ENCODE measurements at regions of chr4 and their contacts with region 1.

Region 1: DNA sequence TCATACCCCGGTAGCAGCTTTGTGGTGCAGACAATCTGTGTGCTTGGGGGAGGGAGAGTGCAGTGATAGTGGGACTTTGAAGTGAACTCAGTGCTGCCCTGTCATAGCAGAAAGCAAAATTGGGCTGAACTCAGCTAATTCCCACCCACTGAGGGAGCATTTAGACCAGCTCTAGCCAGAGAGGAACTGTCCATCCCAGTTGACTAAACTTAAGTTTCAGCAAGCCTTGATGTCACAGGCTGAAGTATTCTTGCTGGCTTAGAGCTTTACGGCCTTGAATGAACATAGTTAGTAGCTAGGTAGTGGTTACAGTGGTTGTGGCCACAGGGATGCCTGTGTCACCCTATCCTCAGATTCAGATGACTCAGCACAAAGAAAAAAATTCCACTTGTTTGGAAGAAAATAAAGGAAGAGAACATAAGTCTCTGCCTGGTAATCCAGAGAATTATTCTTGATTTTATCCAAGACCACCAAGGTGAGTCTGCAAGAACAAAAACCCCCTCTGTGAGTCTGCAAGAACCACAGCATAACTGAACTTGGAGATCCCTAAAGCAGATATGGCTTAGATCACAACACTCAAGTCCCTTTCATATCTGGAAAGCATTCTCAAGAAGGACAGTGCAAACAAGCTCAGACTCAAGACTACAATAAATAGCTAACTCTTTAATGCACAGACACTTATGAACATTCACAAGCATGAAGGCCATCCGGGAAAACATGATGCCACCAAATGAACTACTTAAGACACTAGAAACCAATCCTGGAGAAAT is 39.4 kb downstream of the ADH7 start:
- DNase-seq: no peak
- ATAC-seq: peak; percentile 68
- H3K4me3 ChIP-seq: no peak overlapping the region
- H3K27ac ChIP-seq: peak overlapping the region; percentile 95 to 99
- H3K4me1 ChIP-seq: peaks cover 2 to 8% of the 10 kb centered on the region in 2 donors
- H3K27me3 ChIP-seq: no peaks in the 10 kb centered on the region

Region 2: DNA sequence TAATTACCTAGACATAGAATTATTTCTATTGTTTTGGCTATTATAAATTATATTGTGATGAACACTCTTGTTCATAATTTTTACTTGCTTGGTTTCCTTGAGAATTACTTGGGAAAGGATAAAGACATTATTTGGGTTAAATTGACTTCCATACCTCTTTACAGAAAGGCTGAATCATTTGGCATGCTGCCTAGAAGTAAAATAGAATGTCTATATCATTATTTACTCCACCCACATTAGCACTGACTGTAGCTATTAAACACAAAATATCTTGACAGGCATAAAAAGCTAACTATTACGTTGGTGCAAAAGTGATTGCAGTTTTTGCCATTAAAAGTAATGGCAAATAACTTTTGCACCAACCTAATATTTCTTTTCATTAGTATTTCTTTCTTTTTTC is 147.1 kb before region 1 on chr4:
- intact Hi-C with region 1: loop called in 1 of 2 experiments (anchors 2 kb)
- DNase-seq: no peak
- ATAC-seq: no peak
- H3K4me3 ChIP-seq: no peak overlapping the region
- H3K27ac ChIP-seq: no peak overlapping the region
- H3K4me1 ChIP-seq: no peaks in the 10 kb centered on the region
- H3K27me3 ChIP-seq: no peaks in the 10 kb centered on the region

Region 3: GRCh38 chr4:99300934-99301333 is 94.8 kb before region 1 on chr4:
- intact Hi-C with region 1: loop called (anchors 2 to 5 kb)
- DNase-seq: peak; percentile 86 to 91
- ATAC-seq: peak; percentile 86
- H3K4me3 ChIP-seq: no peak overlapping the region
- H3K27ac ChIP-seq: peak overlapping the region in 1 of 2 donors; percentile 57
- H3K4me1 ChIP-seq: peaks cover 1 to 4% of the 10 kb centered on the region in 2 donors
- H3K27me3 ChIP-seq: no peaks in the 10 kb centered on the region

Region 4: GRCh38 chr4:99723612-99724011 is 327.8 kb after region 1 on chr4:
- intact Hi-C with region 1: no loop called
- DNase-seq: peak; percentile 72 to 81
- ATAC-seq: peak; percentile 81
- H3K4me3 ChIP-seq: no peak overlapping the region
- H3K27ac ChIP-seq: no peak overlapping the region
- H3K4me1 ChIP-seq: peaks cover 0 to 4% of the 10 kb centered on the region in 2 donors
- H3K27me3 ChIP-seq: no peaks in the 10 kb centered on the region